ENCODE measurements at regions of chr5 and their contacts with region 1.

Region 1: DNA sequence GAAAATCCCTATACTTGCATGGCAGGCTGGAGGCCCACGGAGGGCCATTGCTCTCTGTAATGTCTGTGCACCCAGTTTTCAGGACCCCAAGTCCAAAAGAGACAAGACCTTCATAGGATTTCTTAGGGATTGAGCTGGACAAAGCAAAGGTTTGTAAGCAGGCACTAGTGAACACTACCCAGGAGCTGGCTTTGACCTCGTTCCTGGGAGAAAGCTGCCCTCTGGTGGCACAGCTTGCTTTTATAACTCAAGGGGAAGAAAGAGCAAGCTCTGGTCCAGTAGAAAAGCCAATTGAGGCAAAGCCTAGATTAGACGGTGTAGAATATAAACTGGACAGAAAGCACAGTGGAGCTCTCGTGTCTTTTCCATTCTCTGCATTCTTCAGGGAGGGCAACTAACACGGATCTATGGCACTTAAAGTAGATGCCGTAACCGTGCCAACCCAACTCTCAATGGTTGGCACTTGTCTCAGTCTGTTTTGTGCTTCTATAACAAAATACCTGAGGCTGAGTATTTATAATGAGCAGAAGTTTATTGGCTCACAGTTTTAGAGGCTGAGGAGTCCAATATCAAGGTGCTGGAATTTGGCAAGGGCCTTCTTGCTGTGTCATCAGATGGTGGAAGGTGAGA is 7.9 kb downstream of the GABRP start:
- DNase-seq: no peak
- ATAC-seq: peak; percentile 94
- H3K4me3 ChIP-seq: no peak overlapping the region
- H3K27ac ChIP-seq: no peak overlapping the region
- H3K4me1 ChIP-seq: no peaks in the 10 kb centered on the region
- H3K27me3 ChIP-seq: no peaks in the 10 kb centered on the region; a peak in 1 of 4 replicates
- CTCF ChIP-seq: peak; percentile 49 to 71 (median 50)
- EP300 ChIP-seq: no peak
- POLR2A ChIP-seq: no peak
- RAD21 ChIP-seq: peak; percentile 58

Region 2: DNA sequence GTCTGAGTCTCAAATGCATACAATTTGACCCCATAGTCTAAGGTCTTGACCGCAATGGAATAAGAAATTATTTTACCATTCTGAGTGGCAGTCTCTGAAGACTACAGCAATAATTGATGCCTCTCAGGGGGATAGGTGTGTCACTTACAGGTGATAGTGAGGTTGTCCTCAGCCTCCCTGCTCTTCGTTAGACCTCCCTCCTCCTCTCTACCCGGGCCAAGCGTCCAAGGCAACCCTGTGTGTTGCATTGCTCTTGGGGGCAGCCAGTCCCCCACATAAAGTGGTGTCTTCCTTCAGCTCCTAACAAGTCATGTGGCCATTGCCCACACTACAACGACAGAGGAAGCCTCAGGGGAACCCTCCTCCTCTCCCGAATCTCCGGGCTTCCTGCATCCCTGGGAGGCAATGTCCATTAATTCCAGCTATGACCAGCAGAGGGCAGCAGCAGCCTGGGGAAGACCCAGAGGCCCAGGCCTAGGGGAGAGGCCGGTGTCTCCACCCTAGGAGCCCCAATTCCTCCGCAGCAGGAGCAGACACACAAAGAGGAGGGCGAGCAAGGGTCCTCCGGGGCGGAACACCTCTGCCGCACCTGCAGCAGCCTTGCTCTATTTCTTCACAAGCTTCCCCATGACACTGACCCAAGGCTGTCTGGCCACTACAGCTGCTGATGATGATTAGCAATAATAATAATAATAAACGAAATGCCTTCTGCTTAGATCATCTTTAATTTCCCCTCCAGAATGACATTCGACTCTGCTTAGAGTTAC is 152.8 kb before region 1 on chr5:
- CTCF ChIA-PET with region 1: interaction called, 33 read pairs
- POLR2A ChIA-PET with region 1: no interaction called
- RAD21 ChIA-PET with region 1: interaction called, 19 read pairs
- SMC1A ChIA-PET with region 1: interaction called, 8 read pairs
- in situ Hi-C with region 1: no loop called
- intact Hi-C with region 1: loop called (anchors 1 kb)
- DNase-seq: no peak
- ATAC-seq: peak; percentile 92
- H3K4me3 ChIP-seq: no peak overlapping the region
- H3K27ac ChIP-seq: no peak overlapping the region
- H3K4me1 ChIP-seq: no peaks in the 10 kb centered on the region
- H3K27me3 ChIP-seq: peaks cover 3 to 5% of the 10 kb centered on the region in 2 experiments; a peak in 3 of 4 replicates
- CTCF ChIP-seq: peak; percentile 80 to 86 (median 85)
- EP300 ChIP-seq: no peak
- POLR2A ChIP-seq: no peak
- RAD21 ChIP-seq: peak; percentile 78

Region 3: DNA sequence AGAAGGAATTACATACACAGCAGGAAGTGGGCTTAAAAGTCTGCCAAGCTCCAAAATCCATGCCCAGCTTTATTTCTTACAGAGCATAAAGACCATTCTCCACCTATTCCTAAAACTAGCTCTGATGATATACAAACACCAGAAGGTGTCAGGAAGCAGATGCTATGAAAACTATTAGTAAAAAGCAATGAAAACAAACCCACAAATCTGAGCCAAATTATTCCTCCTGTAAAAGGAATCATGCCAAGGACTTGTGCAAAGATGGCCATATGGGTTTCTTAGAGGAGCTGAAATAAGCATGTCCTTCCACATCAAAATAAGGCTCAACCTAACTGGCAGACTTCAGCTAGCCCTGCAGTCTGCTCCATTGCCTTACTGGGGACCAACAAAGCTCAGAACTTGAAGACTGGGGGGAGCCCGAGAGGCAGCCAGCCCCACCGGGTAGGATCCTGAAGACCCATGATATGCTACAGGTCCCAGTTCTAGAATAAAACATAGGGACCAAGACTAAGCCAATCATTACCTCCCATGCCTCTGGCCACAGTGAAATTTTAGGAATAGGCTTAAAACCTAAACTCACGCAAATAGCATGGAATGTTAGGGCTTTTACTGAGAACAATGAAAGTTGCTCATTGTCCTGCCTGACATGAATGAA is 50.8 kb before region 1 on chr5:
- CTCF ChIA-PET with region 1: interaction called, 106 read pairs
- POLR2A ChIA-PET with region 1: no interaction called
- RAD21 ChIA-PET with region 1: interaction called, 44 read pairs
- SMC1A ChIA-PET with region 1: interaction called, 31 read pairs
- in situ Hi-C with region 1: no loop called
- intact Hi-C with region 1: loop called (anchors 1 kb)
- DNase-seq: no peak
- ATAC-seq: no peak
- H3K4me3 ChIP-seq: no peak overlapping the region
- H3K27ac ChIP-seq: no peak overlapping the region
- H3K4me1 ChIP-seq: no peaks in the 10 kb centered on the region
- H3K27me3 ChIP-seq: peaks cover 0 to 7% of the 10 kb centered on the region in 2 experiments; a peak in 3 of 4 replicates
- CTCF ChIP-seq: no peak
- EP300 ChIP-seq: no peak
- POLR2A ChIP-seq: no peak
- RAD21 ChIP-seq: no peak

Region 4: DNA sequence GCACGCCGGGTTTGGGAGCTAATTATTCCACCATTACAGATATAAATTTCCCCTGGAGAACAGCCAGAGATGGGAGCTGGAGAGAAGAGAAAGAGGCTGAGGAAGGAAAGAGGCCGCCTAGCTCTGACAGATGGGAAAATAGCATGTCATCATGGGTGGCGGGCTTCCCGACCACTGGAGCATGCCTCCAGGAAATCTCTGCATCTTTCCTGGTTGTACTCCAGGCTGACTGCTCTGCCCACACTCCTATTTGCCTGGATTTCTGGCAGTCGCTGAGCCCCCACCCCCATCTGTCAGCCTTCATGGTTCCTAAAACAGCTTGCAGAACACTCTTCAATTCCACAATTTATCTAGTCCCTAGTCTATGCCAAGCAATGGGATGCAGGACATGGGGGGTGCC is 22.2 kb before region 1 on chr5:
- CTCF ChIA-PET with region 1: interaction called, 12 read pairs
- POLR2A ChIA-PET with region 1: no interaction called
- RAD21 ChIA-PET with region 1: no interaction called
- SMC1A ChIA-PET with region 1: interaction called, 6 read pairs
- in situ Hi-C with region 1: no loop called
- intact Hi-C with region 1: no loop called
- DNase-seq: no peak
- ATAC-seq: no peak
- H3K4me3 ChIP-seq: no peak overlapping the region
- H3K27ac ChIP-seq: no peak overlapping the region
- H3K4me1 ChIP-seq: no peaks in the 10 kb centered on the region
- H3K27me3 ChIP-seq: no peaks in the 10 kb centered on the region
- CTCF ChIP-seq: no peak
- EP300 ChIP-seq: no peak
- POLR2A ChIP-seq: no peak
- RAD21 ChIP-seq: no peak